ENCODE measurements at regions of chr5 and their contacts with region 1.

Region 1: GRCh38 chr5:131252824-131253171 is 11.1 kb upstream of the CDC42SE2 start:
- DNase-seq: peak; percentile 70
- ATAC-seq: peak; percentile 80
- H3K4me3 Mint-ChIP-seq: peak overlapping the region; percentile 98
- H3K27ac Mint-ChIP-seq: peak overlapping the region; percentile 98
- H3K4me1 Mint-ChIP-seq: peaks cover 61% of the 10 kb centered on the region
- H3K27me3 Mint-ChIP-seq: no peaks in the 10 kb centered on the region

Region 2: DNA sequence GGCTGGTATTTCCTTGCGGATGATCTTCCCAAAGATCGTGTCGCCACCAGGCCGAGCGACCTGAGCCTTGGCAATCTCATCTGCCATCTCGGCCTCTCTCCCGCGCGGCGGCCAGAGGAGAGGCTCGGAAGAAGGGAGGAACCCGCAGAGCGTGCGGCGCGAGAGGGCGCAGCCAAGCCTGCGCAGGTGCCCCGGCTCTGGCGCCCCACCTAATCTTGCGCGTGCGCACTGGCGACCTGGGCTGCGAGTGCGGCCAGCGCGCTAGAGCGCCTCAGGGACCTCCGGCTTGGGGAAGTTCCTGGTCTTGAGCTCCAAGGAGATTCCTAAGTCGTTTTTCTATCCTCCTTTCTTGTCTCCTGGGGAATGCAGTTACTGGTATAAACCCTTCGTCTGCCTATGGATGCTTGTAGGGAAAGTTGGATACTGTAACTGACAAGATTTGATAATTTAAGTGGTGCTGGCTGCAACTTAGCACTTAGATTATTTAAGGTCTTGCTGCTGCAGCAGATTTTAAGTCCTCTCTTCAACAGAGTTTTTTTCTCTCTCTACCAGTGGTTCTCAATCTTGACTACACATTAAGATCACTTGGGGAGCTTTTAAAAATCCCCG is 87.6 kb before region 1 on chr5 and contains the start of gene HINT1:
- POLR2A ChIA-PET with region 1: interaction called, 17 read pairs
- DNase-seq: peak; percentile 97
- ATAC-seq: peak; percentile 85
- H3K4me3 Mint-ChIP-seq: peak within 1 kb of the TSS; percentile 98
- H3K27ac Mint-ChIP-seq: peak within 1 kb of the TSS; percentile 97
- H3K4me1 Mint-ChIP-seq: peaks cover 42% of the 10 kb centered on the region
- H3K27me3 Mint-ChIP-seq: no peaks in the 10 kb centered on the region
- total RNA-seq, gene HINT1: 249 to 251 TPM

Region 3: GRCh38 chr5:131209506-131210150 is 43.2 kb before region 1 on chr5:
- POLR2A ChIA-PET with region 1: interaction called, 18 read pairs
- DNase-seq: peak; percentile 38
- ATAC-seq: peak; percentile 95
- H3K4me3 Mint-ChIP-seq: peak overlapping the region; percentile 83
- H3K27ac Mint-ChIP-seq: peak overlapping the region; percentile 95
- H3K4me1 Mint-ChIP-seq: peaks cover 37% of the 10 kb centered on the region
- H3K27me3 Mint-ChIP-seq: no peaks in the 10 kb centered on the region

Region 4: DNA sequence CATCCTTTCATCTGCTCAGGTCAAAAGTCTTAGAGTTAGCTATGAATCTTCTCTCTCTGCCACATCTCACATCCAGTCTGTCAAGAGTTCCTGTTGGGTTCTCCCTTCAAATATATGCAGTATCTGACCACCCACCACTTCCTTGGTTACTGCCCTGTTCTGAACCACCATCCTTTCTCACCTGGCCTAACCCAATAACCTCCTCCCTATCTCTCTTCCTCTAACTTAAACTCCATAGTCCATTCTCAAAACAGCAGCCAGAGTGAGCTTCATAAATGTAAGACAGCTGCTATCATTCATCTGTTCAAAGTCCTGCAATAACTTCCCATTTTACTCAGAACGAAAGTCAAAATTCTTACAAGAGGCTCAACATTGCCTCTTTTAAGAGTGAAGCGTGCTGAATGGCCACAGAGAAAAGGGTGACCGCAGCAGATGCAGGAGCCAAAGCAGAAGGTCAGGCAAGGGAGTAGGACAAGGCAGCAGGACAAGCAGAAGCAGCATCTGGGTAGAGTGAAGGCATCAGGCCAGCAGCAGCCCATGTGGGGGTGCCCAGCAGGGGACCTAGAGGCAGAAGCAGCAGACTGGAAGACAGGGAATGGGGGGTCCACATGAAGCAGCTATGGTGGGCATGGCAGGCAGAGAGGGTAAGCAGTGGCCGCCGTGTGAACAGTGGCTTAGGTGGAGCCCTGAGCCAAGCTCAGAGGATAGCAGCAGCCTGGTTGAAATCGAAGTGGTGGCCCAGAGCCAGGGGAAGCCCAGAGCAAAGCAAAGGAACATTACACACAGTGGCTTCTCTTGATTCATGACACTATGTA is 28.2 kb before region 1 on chr5:
- POLR2A ChIA-PET with region 1: interaction called, 14 read pairs
- DNase-seq: peak; percentile 36
- ATAC-seq: peak; percentile 90
- H3K4me3 Mint-ChIP-seq: no peak overlapping the region
- H3K27ac Mint-ChIP-seq: no peak overlapping the region
- H3K4me1 Mint-ChIP-seq: peaks cover 6% of the 10 kb centered on the region
- H3K27me3 Mint-ChIP-seq: no peaks in the 10 kb centered on the region

Region 5: DNA sequence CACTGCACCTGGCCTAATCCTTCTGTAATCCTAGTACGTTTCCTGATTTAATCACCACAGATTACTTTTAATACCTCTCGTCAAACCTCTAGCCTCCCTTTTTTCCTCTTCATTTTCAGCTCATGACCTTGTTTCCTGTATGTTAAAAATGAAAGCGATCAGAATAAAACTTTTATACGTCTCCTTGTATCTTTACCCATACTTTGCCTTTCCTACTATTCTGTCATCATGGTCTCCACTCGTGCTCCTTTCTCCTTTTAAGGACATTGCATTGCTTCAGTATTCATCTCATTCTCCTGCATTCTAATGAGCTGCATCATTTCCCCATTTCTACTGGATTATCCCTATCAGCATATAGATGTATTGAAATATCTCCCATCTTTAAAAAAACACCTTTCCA is 19.5 kb after region 1 on chr5:
- POLR2A ChIA-PET with region 1: interaction called, 11 read pairs
- DNase-seq: no peak
- ATAC-seq: no peak
- H3K4me3 Mint-ChIP-seq: peak overlapping the region; percentile 82
- H3K27ac Mint-ChIP-seq: peak overlapping the region; percentile 91
- H3K4me1 Mint-ChIP-seq: peaks cover 56% of the 10 kb centered on the region
- H3K27me3 Mint-ChIP-seq: no peaks in the 10 kb centered on the region

Measured in activated naive CD8-positive, alpha-beta T cell treated with anti-CD3 and anti-CD28 coated beads, Interleukin-2, amount 10 ng/mL, durations not matched to agents 7 days and 5 days (primary cell).